ENCODE measurements at regions of chr17 and their contacts with region 1.

Region 1: DNA sequence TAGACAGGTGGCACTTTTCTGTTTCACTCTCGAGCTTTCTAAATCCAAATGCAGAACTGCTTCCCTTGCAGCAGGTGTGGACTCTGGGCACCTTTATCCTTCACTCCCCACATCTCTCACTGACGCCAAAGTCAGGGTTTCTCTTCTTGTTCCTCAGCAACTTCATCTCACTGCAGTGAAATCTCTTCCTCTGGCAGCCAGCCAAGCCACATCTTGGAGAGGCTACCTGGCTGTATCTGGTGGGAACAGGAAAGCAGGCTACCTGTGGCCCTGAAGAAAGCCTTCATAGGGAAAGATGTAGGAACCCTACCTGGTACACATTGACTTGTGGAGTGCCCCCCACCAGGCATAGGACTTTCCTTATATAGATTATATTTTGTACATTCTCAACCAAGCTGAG is 159.1 kb downstream of the UTP18 start:
- DNase-seq: no peak
- ATAC-seq: no peak
- H3K4me3 ChIP-seq: no peak overlapping the region
- H3K27ac ChIP-seq: no peak overlapping the region
- H3K4me1 ChIP-seq: no peaks in the 10 kb centered on the region
- H3K27me3 ChIP-seq: peaks cover 0 to 17% (median 4%) of the 10 kb centered on the region in 7 donors
- CTCF ChIP-seq: no peak

Region 2: GRCh38 chr17:50234581-50234980 is 1184.9 kb before region 1 on chr17:
- intact Hi-C with region 1: no loop called
- DNase-seq: no peak
- ATAC-seq: no peak
- H3K4me3 ChIP-seq: no peak overlapping the region
- H3K27ac ChIP-seq: no peak overlapping the region
- H3K4me1 ChIP-seq: peaks cover 0 to 11% (median 0%) of the 10 kb centered on the region in 9 donors
- H3K27me3 ChIP-seq: peaks cover 0 to 23% (median 4%) of the 10 kb centered on the region in 7 donors
- CTCF ChIP-seq: no peak

Region 3: DNA sequence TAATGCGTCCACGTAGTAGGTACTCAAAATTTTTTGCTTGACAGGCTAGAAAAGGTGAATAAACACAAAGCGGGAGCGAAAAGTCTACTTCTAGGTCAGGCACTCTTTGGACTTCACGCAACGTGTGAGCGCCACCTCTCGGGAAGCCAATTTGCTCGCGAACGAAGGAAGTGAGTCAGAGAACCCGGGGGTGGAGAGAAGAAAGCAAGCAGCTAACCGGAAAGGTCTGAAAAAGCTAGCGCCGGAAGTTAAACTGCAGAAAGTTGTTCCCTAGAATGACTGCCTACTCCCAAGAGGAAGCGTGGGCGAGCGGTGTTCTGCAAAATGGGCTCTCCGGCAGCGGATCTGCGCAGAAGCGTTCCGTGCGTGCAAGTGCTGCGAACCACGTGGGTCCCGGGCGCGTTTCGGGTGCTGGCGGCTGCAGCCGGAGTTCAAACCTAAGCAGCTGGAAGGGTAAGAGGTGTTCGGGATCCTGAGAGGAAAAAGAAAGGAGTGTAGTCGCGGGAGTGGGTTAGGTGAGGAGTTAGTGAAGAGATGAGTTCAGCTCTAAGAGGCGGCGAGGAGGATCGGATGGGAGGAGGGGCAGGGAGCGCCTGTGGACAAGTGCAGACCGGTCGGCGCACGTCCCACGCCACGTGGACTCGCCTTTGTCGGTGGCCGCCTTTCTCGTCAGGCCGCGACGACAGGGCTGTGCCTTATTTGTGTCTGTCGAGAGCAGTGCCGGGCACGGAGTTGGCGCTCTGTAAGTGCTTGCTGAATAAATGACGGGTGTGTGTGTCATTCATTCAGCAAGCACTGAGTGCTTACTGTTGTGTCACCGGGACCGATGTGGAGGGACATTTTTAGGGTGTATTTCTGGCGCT is 266.0 kb before region 1 on chr17 and contains the start of gene NME1:
- intact Hi-C with region 1: no loop called
- DNase-seq: peak; percentile 92 to 98
- ATAC-seq: peak; percentile 96 to 99 (median 98)
- H3K4me3 ChIP-seq: peak within 1 kb of the TSS; percentile 51 to 90 (median 71)
- H3K27ac ChIP-seq: peak within 1 kb of the TSS; percentile 72 to 91 (median 82)
- H3K4me1 ChIP-seq: peaks cover 0 to 22% (median 12%) of the 10 kb centered on the region in 9 donors
- H3K27me3 ChIP-seq: no peaks in the 10 kb centered on the region
- CTCF ChIP-seq: peak; percentile 55 to 96 (median 76)
- total RNA-seq, gene NME1: 12.9 to 52.0 (median 21.8) TPM

Region 4: GRCh38 chr17:51351890-51352289 is 67.6 kb before region 1 on chr17:
- intact Hi-C with region 1: loop called in 1 of 10 experiments (anchors 10 kb)
- DNase-seq: peak in 1 of 2 donors; percentile 23
- ATAC-seq: peak in 1 of 8 donors; percentile 42
- H3K4me3 ChIP-seq: no peak overlapping the region
- H3K27ac ChIP-seq: no peak overlapping the region
- H3K4me1 ChIP-seq: no peaks in the 10 kb centered on the region
- H3K27me3 ChIP-seq: peaks cover 0 to 52% (median 4%) of the 10 kb centered on the region in 7 donors
- CTCF ChIP-seq: no peak

Region 5: GRCh38 chr17:51463353-51463752 is 43.9 kb after region 1 on chr17:
- intact Hi-C with region 1: no loop called
- DNase-seq: no peak
- ATAC-seq: no peak
- H3K4me3 ChIP-seq: no peak overlapping the region
- H3K27ac ChIP-seq: no peak overlapping the region
- H3K4me1 ChIP-seq: no peaks in the 10 kb centered on the region
- H3K27me3 ChIP-seq: peaks cover 0 to 23% (median 7%) of the 10 kb centered on the region in 7 donors
- CTCF ChIP-seq: no peak